Breast epithelium (tissue), 4 donors: ENCODE measurements at regions of chr14 and their contacts with region 1.

Region 1: GRCh38 chr14:42277840-42278239 is 671.2 kb downstream of the LRFN5 start:
- DNase-seq: no peak
- H3K4me3 ChIP-seq: no peak overlapping the region
- H3K27ac ChIP-seq: no peak overlapping the region
- H3K4me1 ChIP-seq: no peaks in the 10 kb centered on the region
- H3K27me3 ChIP-seq: no peaks in the 10 kb centered on the region
- CTCF ChIP-seq: no peak
- POLR2A ChIP-seq: no peak

Region 2: DNA sequence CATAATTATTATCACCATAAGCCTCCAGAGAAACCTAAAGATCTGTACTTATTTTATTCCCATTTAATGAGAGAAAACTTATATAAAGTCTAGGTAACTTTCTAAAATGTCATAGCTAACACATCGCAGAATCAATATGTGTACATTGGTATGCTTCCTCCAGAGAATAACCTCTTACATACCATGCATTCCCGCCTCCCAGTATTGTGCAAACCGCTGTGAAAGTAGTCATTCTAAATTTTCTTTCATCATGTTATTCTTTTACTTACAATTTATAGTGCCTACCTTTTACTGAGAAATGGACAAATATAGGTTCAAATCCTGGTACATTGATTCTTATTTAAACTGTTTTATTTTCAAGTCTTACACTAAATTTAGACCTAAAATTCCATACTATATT is 207.8 kb before region 1 on chr14:
- intact Hi-C with region 1: loop called (anchors 5 kb)
- DNase-seq: no peak
- H3K4me3 ChIP-seq: no peak overlapping the region
- H3K27ac ChIP-seq: no peak overlapping the region
- H3K4me1 ChIP-seq: no peaks in the 10 kb centered on the region
- H3K27me3 ChIP-seq: no peaks in the 10 kb centered on the region
- CTCF ChIP-seq: no peak
- POLR2A ChIP-seq: no peak

Region 3: DNA sequence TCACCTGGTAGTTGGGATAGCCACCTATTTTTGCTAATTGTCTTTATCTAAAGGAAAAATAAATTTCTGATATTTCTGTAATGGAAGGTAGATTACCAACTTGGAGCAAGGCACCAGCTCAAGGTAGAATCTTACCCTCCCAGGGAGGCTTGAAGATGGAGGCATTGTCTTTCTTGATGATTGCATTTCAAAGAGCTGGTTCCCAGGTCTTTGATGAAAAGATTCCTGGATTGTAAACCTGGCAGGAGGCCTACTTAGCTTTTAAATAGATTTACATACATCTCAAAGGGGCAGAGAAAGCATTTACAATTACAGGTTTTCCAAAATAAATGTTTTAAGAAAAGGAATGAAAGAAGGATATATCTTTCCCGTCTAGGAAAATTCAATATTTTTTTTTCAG is 58.1 kb after region 1 on chr14:
- intact Hi-C with region 1: no loop called
- DNase-seq: no peak
- H3K4me3 ChIP-seq: no peak overlapping the region
- H3K27ac ChIP-seq: no peak overlapping the region
- H3K4me1 ChIP-seq: no peaks in the 10 kb centered on the region
- H3K27me3 ChIP-seq: no peaks in the 10 kb centered on the region
- CTCF ChIP-seq: no peak
- POLR2A ChIP-seq: no peak

Region 4: GRCh38 chr14:42353315-42353714 is 75.5 kb after region 1 on chr14:
- intact Hi-C with region 1: no loop called
- DNase-seq: no peak
- H3K4me3 ChIP-seq: no peak overlapping the region
- H3K27ac ChIP-seq: no peak overlapping the region
- H3K4me1 ChIP-seq: no peaks in the 10 kb centered on the region
- H3K27me3 ChIP-seq: no peaks in the 10 kb centered on the region
- CTCF ChIP-seq: no peak
- POLR2A ChIP-seq: no peak

Region 5: GRCh38 chr14:42814817-42815216 is 537.0 kb after region 1 on chr14:
- intact Hi-C with region 1: no loop called
- DNase-seq: no peak
- H3K4me3 ChIP-seq: no peak overlapping the region
- H3K27ac ChIP-seq: no peak overlapping the region
- H3K4me1 ChIP-seq: no peaks in the 10 kb centered on the region
- H3K27me3 ChIP-seq: no peaks in the 10 kb centered on the region
- CTCF ChIP-seq: no peak
- POLR2A ChIP-seq: no peak